Activated CD4-positive, alpha-beta memory T cell treated with anti-CD3 and anti-CD28 coated beads, Interleukin-2, amount 10 ng/mL, durations not matched to agents 7 days and 5 days (primary cell): ENCODE measurements at regions of chr5 and their contacts with region 1.

Region 1: GRCh38 chr5:151740336-151740942 is 18.0 kb downstream of the ATOX1 start:
- DNase-seq: peak; percentile 48
- H3K4me3 Mint-ChIP-seq: no peak overlapping the region
- H3K27ac Mint-ChIP-seq: no peak overlapping the region
- H3K4me1 Mint-ChIP-seq: peaks cover 38% of the 10 kb centered on the region
- H3K27me3 Mint-ChIP-seq: no peaks in the 10 kb centered on the region

Region 2: GRCh38 chr5:151659001-151659754 is 81.3 kb before region 1 on chr5:
- CTCF ChIA-PET with region 1: interaction called, 88 read pairs
- POLR2A ChIA-PET with region 1: no interaction called
- DNase-seq: peak; percentile 82
- H3K4me3 Mint-ChIP-seq: no peak overlapping the region
- H3K27ac Mint-ChIP-seq: no peak overlapping the region
- H3K4me1 Mint-ChIP-seq: peaks cover 19% of the 10 kb centered on the region
- H3K27me3 Mint-ChIP-seq: peaks cover 11% of the 10 kb centered on the region

Region 3: DNA sequence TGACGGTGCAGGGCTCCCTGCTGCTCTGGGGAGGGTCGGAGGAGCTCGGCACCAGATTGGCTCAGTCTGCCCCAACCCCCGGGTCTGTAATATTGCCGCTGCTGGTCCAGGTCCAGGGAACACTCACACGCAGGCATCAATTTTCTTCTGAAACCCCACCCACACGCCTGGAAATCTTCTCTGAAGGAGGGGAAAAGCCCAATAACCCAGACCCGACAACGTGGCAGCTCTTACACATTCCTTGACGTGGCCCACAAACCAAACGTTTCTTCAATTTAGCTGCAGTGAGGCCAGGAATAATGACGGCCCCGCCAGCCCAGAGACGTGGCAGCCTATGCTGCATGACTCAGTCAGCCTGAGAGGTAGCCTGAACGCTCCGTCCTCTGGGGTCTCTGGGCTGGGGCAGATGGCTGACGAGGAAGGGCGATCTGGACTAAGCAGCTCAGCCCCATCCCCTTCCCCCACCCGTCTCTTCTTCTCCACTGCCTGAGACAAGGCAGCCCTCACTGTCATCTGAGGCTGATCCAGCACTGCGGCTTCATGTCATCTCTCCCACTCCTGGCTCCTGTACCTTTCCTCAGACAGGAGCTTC is 43.9 kb before region 1 on chr5:
- CTCF ChIA-PET with region 1: no interaction called
- POLR2A ChIA-PET with region 1: no interaction called
- DNase-seq: no peak
- H3K4me3 Mint-ChIP-seq: no peak overlapping the region
- H3K27ac Mint-ChIP-seq: no peak overlapping the region
- H3K4me1 Mint-ChIP-seq: no peaks in the 10 kb centered on the region
- H3K27me3 Mint-ChIP-seq: peaks cover 6% of the 10 kb centered on the region

Region 4: GRCh38 chr5:151730384-151730783 is 10.1 kb before region 1 on chr5:
- CTCF ChIA-PET with region 1: interaction called, 16 read pairs
- POLR2A ChIA-PET with region 1: no interaction called
- DNase-seq: no peak
- H3K4me3 Mint-ChIP-seq: no peak overlapping the region
- H3K27ac Mint-ChIP-seq: no peak overlapping the region
- H3K4me1 Mint-ChIP-seq: peaks cover 11% of the 10 kb centered on the region
- H3K27me3 Mint-ChIP-seq: no peaks in the 10 kb centered on the region

Region 5: GRCh38 chr5:151758430-151759241 is 18.2 kb after region 1 on chr5 and contains the start of gene ATOX1:
- CTCF ChIA-PET with region 1: interaction called, 38 read pairs
- POLR2A ChIA-PET with region 1: interaction called, 13 read pairs
- DNase-seq: peak; percentile 93
- H3K4me3 Mint-ChIP-seq: peak within 1 kb of the TSS; percentile 78
- H3K27ac Mint-ChIP-seq: peak within 1 kb of the TSS; percentile 80
- H3K4me1 Mint-ChIP-seq: peaks cover 35% of the 10 kb centered on the region
- H3K27me3 Mint-ChIP-seq: no peaks in the 10 kb centered on the region
- total RNA-seq, gene ATOX1: 62.6 to 64.3 TPM